ENCODE measurements at regions of chr1 and their contacts with region 1.

Region 1: DNA sequence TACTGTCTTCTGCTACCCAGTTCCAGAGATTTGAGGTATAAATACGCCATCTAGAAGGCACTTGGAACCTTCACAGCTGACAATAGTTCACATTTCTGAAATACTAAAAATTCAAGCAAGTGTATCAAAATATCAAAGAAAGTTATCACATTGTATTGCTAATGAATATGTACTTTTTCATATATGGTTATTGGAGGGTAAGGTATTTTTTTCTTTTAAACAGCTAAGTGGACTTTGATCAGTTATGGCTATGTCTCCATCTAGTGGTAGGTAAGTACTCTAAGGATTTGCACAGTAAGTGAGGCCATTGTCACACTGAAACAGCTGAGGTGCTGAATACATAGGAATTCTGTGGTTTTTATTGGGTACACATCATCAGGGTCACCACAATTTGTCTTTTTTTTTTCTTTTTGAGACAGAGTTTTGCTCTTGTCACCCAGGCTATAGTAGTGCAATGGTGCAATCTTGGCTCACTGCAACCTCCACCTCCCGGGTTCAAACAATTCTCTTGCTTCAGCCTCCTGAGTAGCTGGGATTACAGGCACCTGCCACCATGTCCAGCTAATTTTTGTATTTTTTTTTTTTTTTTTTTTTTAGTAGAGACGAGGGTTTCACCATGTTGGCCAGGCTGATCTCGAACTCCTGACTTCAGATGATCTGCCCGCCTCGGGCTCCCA is 49.1 kb upstream of the CR2 start:
- DNase-seq: peak; percentile 77
- ATAC-seq: peak; percentile 71
- H3K4me3 ChIP-seq: no peak overlapping the region
- H3K4me3 Mint-ChIP-seq: no peak overlapping the region
- H3K27ac ChIP-seq: no peak overlapping the region
- H3K27ac Mint-ChIP-seq: peak overlapping the region; percentile 74
- H3K4me1 ChIP-seq: peaks cover 18 to 27% of the 10 kb centered on the region in 2 donors
- H3K4me1 Mint-ChIP-seq: peaks cover 30% of the 10 kb centered on the region
- H3K27me3 ChIP-seq: no peaks in the 10 kb centered on the region
- H3K27me3 Mint-ChIP-seq: no peaks in the 10 kb centered on the region
- CTCF ChIP-seq: peak; percentile 92

Region 2: GRCh38 chr1:207052911-207053769 is 351.8 kb before region 1 on chr1 and contains the start of gene PFKFB2:
- CTCF ChIA-PET with region 1: interaction called, 15 read pairs
- POLR2A ChIA-PET with region 1: no interaction called
- intact Hi-C with region 1: no loop called
- DNase-seq: peak; percentile 98
- ATAC-seq: peak; percentile 87
- H3K4me3 ChIP-seq: peak within 1 kb of the TSS; percentile 53 to 92 (median 73)
- H3K4me3 Mint-ChIP-seq: peak within 1 kb of the TSS; percentile 99
- H3K27ac ChIP-seq: peak within 1 kb of the TSS; percentile 87 to 96
- H3K27ac Mint-ChIP-seq: peak within 1 kb of the TSS; percentile 99
- H3K4me1 ChIP-seq: peaks cover 39 to 42% of the 10 kb centered on the region in 2 donors
- H3K4me1 Mint-ChIP-seq: peaks cover 53% of the 10 kb centered on the region
- H3K27me3 ChIP-seq: no peaks in the 10 kb centered on the region
- H3K27me3 Mint-ChIP-seq: no peaks in the 10 kb centered on the region
- CTCF ChIP-seq: peak; percentile 10
- total RNA-seq, gene PFKFB2: 15.6 and 18.2 TPM in 2 replicates

Region 3: DNA sequence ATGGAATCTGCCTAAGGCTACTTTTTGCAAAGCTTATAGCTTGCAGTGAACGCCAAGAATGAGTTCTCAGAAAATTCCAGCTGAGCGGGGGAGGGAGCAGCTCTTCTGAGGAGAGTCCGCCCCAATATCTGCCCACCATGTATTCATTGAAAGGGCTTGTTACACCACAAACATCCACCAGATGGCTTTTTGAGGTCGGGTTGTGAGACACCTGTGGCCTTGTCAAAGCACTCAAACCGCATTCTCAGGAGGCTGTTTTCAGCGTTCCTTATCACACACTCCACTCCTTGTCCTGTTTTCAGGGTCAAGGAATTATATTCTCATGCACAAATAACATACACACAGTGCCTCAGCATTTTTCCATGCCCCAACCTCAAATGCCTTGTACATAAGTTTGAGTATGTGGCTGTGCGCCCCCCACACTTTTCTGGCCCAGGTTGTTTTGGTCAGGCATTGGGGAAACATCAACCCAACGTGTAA is 320.2 kb before region 1 on chr1:
- CTCF ChIA-PET with region 1: interaction called, 183 read pairs
- POLR2A ChIA-PET with region 1: no interaction called
- intact Hi-C with region 1: loop called (anchors 1 kb)
- DNase-seq: peak; percentile 82
- ATAC-seq: peak; percentile 84
- H3K4me3 ChIP-seq: no peak overlapping the region
- H3K4me3 Mint-ChIP-seq: no peak overlapping the region
- H3K27ac ChIP-seq: no peak overlapping the region
- H3K27ac Mint-ChIP-seq: no peak overlapping the region
- H3K4me1 ChIP-seq: peaks cover 14 to 15% of the 10 kb centered on the region in 2 donors
- H3K4me1 Mint-ChIP-seq: peaks cover 13% of the 10 kb centered on the region
- H3K27me3 ChIP-seq: no peaks in the 10 kb centered on the region
- H3K27me3 Mint-ChIP-seq: no peaks in the 10 kb centered on the region
- CTCF ChIP-seq: peak; percentile 77

Region 4: GRCh38 chr1:207336559-207337467 is 68.2 kb before region 1 on chr1:
- CTCF ChIA-PET with region 1: interaction called, 11 read pairs
- POLR2A ChIA-PET with region 1: no interaction called
- intact Hi-C with region 1: loop called (anchors 5 kb)
- DNase-seq: peak; percentile 92
- ATAC-seq: peak; percentile 79
- H3K4me3 ChIP-seq: peak overlapping the region in 3 of 5 experiments; percentile 15 to 42 (median 27)
- H3K4me3 Mint-ChIP-seq: peak overlapping the region; percentile 72
- H3K27ac ChIP-seq: peak overlapping the region; percentile 95 to 98
- H3K27ac Mint-ChIP-seq: peak overlapping the region; percentile 94
- H3K4me1 ChIP-seq: peaks cover 52 to 74% of the 10 kb centered on the region in 2 donors
- H3K4me1 Mint-ChIP-seq: peaks cover 75% of the 10 kb centered on the region
- H3K27me3 ChIP-seq: no peaks in the 10 kb centered on the region
- H3K27me3 Mint-ChIP-seq: no peaks in the 10 kb centered on the region
- CTCF ChIP-seq: no peak

Region 5: DNA sequence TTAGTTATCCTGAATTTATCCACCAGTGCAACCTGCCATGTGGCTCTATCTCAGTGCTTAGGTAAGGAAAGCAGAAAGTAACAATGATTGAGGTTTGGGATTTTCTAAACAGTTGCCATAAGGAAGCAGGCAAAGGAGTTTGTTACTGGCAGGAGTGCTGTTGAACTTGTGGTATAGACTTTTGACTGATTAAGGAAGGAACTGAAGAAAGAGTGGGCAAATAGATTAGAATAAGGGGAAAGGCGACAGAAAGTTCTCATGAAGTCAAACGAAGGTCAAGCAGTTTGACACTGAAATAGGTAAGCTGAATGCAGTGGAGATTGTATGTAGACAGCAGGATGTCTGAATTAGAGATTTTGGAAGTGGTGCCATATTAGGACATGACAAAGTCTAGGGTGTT is 25.0 kb after region 1 on chr1:
- CTCF ChIA-PET with region 1: interaction called, 17 read pairs
- POLR2A ChIA-PET with region 1: interaction called, 3 read pairs
- intact Hi-C with region 1: no loop called
- DNase-seq: peak; percentile 41
- ATAC-seq: peak; percentile 2
- H3K4me3 ChIP-seq: peak overlapping the region in 1 of 5 experiments; percentile 54
- H3K4me3 Mint-ChIP-seq: peak overlapping the region; percentile 62
- H3K27ac ChIP-seq: peak overlapping the region; percentile 65 to 83
- H3K27ac Mint-ChIP-seq: peak overlapping the region; percentile 78
- H3K4me1 ChIP-seq: peaks cover 80 to 85% of the 10 kb centered on the region in 2 donors
- H3K4me1 Mint-ChIP-seq: peaks cover 86% of the 10 kb centered on the region
- H3K27me3 ChIP-seq: no peaks in the 10 kb centered on the region
- H3K27me3 Mint-ChIP-seq: no peaks in the 10 kb centered on the region
- CTCF ChIP-seq: no peak

Region 6: DNA sequence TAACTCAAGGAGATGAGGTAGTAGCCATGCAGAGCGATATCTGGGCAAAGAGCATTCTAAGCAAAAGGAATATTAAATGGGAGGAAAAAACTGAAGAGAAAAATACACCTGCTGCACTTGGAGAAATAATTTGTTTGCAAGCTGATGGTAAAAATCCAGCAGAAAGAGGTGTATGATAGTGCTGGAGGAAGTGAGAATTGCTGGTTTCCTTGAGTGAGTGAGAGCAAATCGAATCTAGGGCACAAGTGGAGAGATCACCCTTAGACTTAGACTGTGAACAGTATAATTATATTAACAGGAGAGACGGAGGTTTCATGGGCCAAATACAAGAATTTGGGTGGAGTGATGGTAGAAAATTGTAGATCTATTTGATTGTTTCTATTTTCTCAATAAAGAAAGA is 88.2 kb after region 1 on chr1:
- CTCF ChIA-PET with region 1: interaction called, 108 read pairs
- POLR2A ChIA-PET with region 1: no interaction called
- intact Hi-C with region 1: no loop called
- DNase-seq: peak; percentile 28
- ATAC-seq: no peak
- H3K4me3 ChIP-seq: no peak overlapping the region
- H3K4me3 Mint-ChIP-seq: no peak overlapping the region
- H3K27ac ChIP-seq: no peak overlapping the region
- H3K27ac Mint-ChIP-seq: no peak overlapping the region
- H3K4me1 ChIP-seq: peaks cover 36 to 41% of the 10 kb centered on the region in 2 donors
- H3K4me1 Mint-ChIP-seq: peaks cover 27% of the 10 kb centered on the region
- H3K27me3 ChIP-seq: no peaks in the 10 kb centered on the region
- H3K27me3 Mint-ChIP-seq: no peaks in the 10 kb centered on the region
- CTCF ChIP-seq: no peak

Measured in B cell (primary cell).